Right cardiac atrium (tissue), 5 donors: ENCODE measurements at regions of chr6 and their contacts with region 1.

Region 1: DNA sequence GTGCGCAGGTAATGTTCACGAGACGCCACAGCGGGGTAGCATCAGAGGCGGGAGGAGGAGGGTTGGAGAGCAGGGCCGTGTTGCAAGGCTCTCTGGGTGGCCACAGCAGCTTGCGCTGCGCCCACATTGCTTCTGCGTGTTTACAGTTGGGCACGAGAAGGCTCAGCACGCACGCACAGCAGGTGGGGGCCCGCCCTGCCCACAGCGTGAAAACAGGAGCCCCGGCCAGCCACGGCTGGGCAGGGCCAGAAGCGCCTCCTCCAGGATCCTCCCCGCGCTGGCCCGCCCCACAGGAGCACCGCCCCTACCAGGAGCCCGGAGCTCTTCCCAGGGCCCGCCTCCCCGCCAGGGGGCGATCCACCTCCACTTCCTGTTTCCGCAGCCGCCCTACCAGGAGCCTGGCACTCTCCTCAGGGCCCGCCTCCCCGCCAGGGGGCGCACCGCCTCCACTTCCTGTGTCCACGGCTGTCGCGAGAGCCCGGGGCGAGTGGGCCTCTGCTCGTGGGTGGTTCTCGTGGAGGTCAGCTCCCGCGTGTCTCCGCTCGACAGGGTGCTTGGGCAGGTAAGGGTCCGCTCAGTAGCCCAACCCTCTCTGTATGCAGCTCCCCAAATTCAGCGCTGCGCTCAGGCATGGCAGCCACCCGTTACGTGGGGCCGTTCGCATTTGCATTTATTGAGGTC is at the start of gene FAM50B:
- DNase-seq: peak; percentile 92 to 98 (median 98)
- ATAC-seq: peak; percentile 97 to 98
- H3K4me3 ChIP-seq: peak within 1 kb of the TSS; percentile 0
- H3K27ac ChIP-seq: peak within 1 kb of the TSS; percentile 32
- H3K4me1 ChIP-seq: no peaks in the 10 kb centered on the region
- H3K27me3 ChIP-seq: no peaks in the 10 kb centered on the region
- total RNA-seq, gene FAM50B: 14.0 to 25.3 (median 23.9) TPM

Region 2: GRCh38 chr6:3939964-3940363 is 90.9 kb after region 1 on chr6:
- intact Hi-C with region 1: loop called in 1 of 4 experiments (anchors 10 kb)
- DNase-seq: peak in 1 of 3 donors; percentile 17
- ATAC-seq: peak; percentile 41 to 56
- H3K4me3 ChIP-seq: no peak overlapping the region
- H3K27ac ChIP-seq: no peak overlapping the region
- H3K4me1 ChIP-seq: no peaks in the 10 kb centered on the region
- H3K27me3 ChIP-seq: no peaks in the 10 kb centered on the region